Dendritic cell treated with granulocyte-macrophage colony-stimulating factor and Interleukin-4, amounts not matched to agents 40 ng/mL and 50 ng/mL, for 4 days (primary cell): ENCODE measurements at regions of chr1 and their contacts with region 1.

Region 1: GRCh38 chr1:3796215-3797061 is at the start of gene LRRC47:
- H3K4me3 Mint-ChIP-seq: peak within 1 kb of the TSS; percentile 87
- H3K27ac Mint-ChIP-seq: peak within 1 kb of the TSS; percentile 85
- H3K4me1 Mint-ChIP-seq: peaks cover 34% of the 10 kb centered on the region
- H3K27me3 Mint-ChIP-seq: peaks cover 14% of the 10 kb centered on the region

Region 2: DNA sequence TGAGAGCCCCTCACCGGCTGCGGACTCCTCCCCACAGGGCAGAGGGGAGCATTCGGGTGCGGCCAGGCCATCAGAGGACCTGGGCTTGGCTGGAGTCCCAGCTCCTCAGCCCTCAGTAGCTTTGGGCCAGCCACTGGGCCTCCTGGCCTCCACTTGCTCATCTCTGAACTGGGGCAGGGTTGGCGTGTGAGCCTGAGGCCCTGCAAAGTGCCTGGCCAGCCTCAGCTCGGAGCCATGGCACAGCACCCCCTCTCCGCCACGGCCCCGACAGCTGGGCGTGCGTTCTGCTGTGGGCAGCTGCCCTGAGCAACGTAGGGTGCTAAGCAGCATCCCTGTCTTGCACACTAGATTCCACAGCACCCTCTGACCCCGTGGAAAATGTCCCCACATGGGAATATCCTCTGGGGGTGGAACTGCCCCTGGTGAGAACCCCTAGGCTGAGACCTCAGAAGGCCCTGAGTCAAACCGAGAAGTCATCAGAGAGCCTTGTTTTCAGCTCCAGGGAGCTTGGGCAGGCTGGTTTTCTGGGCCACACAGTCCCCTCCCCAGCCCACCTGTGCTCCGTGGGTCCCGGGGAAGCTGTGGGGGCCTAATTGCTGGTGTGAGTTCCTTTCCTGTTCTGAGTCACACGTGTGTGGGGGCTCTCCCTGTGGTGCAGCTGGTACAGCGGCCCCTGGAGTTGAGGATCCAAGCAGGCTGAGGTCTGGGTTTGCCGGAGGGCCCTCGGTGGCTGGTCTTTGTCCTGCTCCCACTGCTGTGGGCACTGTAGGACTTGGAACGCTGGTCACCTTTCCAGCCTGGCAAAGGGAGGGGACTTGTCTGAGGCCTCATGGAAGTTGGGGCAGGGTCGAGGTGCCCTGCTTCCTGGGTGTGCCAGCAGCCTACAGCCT is 119.6 kb before region 1 on chr1:
- intact Hi-C with region 1: no loop called
- H3K4me3 Mint-ChIP-seq: no peak overlapping the region
- H3K27ac Mint-ChIP-seq: no peak overlapping the region
- H3K4me1 Mint-ChIP-seq: peaks cover 56% of the 10 kb centered on the region
- H3K27me3 Mint-ChIP-seq: peaks cover 14% of the 10 kb centered on the region

Region 3: DNA sequence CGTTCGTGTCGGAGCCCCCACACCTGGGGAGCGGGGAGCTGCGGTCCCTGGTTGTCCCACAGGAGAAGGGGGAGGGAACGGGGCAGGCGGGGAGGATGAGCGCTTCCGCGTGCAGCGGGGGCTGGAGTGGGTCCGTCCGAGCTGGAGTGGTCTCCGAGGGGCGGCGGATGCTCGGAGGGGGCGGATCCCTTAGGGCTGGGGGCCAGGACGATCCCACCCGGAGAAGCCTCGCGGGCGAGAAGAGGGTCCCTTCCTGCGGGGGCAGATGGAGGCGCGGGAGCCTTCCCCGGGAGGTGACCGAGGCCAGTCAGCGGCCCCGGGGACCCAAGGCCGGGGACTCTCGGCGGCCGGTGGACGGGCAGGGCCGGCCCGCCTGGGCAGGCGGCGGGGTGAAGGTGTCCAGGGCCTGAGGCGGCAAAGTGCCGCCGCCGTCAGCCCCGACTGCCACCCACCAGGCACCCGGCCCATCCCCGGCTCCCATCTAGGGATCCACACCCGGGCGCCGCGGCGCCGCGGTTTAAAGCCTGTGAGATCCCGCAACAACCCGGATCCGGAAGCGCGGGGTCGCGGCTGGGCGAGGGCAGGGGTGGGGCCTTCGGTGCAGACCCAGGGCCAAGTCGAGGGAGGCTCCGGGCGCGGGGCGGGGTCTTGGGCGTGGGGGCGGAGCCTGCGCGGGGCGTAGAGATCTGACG is 49.5 kb before region 1 on chr1:
- intact Hi-C with region 1: loop called (anchors 10 kb)
- H3K4me3 Mint-ChIP-seq: peak overlapping the region; percentile 74
- H3K27ac Mint-ChIP-seq: peak overlapping the region; percentile 65
- H3K4me1 Mint-ChIP-seq: peaks cover 36% of the 10 kb centered on the region
- H3K27me3 Mint-ChIP-seq: peaks cover 6% of the 10 kb centered on the region

Region 4: DNA sequence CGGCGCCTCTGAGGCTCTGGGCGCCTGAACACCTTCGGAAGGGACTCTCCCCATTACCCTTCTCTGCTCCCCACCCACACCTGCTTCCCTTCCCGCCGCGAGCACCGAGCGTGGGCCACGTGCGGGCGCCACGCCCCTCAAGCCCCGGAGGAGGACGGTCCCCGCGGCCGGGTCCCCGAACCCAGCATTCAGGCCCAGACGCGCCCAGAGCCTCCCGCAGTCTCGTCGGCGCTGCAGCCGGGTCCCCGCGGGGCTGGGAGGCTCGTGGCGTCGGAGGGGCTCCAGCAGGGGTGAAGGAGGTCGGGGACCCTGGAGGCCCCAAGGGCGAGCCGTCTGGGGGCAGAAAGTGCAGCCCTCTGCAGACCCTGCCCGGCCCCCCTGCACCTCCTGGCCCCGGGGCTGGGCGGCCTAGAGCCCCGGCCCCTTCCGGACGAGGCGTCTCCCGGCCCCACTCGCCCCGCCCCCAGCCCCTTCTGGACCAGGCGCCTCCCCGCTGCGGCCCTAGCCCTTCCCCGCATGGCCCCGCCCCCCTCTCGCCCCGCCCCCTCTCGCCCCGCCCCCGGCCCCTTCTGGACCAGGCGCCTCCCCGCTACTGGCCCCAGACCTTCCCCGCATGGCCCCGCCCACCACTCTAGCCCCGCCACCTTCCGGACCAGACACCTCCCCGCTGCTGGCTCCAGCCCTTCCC is 24.3 kb before region 1 on chr1:
- intact Hi-C with region 1: loop called (anchors 1 kb)
- H3K4me3 Mint-ChIP-seq: peak overlapping the region; percentile 71
- H3K27ac Mint-ChIP-seq: no peak overlapping the region
- H3K4me1 Mint-ChIP-seq: peaks cover 31% of the 10 kb centered on the region
- H3K27me3 Mint-ChIP-seq: peaks cover 39% of the 10 kb centered on the region

Region 5: DNA sequence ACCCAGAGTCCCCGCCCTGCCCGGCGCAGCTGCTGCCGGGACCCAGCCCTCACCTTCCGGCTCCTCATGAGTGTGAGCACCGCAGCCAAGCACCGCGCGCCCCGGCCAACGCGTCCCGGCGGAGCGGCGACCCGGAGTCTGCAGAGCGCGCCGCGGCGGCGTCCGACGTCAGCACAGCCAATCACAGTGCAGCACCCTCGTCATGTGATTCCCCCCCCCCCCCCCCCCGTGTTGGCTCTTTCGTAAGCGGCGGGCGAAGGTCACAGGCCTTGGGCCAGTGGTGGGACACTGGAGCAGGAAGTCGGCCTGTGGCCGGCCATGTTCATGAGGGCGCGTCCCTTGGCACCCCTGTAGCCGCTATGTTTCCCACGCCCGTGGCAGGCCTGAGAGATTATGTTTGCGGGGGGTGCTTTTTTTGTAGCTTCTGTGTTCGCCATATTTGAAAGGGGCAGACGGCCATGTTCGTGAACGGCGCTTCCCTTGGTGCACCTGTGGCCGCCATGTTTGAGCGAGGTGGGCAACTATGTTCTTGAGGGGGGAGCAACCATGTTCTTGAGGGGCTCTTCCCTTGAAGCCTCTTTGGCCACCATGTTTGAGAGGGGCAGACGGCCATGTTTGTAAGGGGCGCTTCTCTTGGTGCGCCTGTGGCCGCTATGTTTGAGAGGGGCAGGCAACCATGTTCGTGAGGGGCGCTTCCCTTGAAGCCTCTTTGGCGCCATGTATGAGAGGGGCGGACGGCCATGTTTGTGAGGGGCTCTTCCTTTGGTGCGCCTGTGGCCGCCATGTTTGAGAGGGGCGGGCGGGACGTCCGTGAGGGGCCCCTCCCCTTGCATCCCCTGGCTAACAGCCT is 103.9 kb after region 1 on chr1 and contains the start of gene C1orf174:
- intact Hi-C with region 1: loop called (anchors 2 kb)
- H3K4me3 Mint-ChIP-seq: peak within 1 kb of the TSS; percentile 88
- H3K27ac Mint-ChIP-seq: peak within 1 kb of the TSS; percentile 99
- H3K4me1 Mint-ChIP-seq: peaks cover 48% of the 10 kb centered on the region
- H3K27me3 Mint-ChIP-seq: no peaks in the 10 kb centered on the region